GM18951 (cell line): ENCODE measurements at regions of chr14 and their contacts with region 1.

Region 1: DNA sequence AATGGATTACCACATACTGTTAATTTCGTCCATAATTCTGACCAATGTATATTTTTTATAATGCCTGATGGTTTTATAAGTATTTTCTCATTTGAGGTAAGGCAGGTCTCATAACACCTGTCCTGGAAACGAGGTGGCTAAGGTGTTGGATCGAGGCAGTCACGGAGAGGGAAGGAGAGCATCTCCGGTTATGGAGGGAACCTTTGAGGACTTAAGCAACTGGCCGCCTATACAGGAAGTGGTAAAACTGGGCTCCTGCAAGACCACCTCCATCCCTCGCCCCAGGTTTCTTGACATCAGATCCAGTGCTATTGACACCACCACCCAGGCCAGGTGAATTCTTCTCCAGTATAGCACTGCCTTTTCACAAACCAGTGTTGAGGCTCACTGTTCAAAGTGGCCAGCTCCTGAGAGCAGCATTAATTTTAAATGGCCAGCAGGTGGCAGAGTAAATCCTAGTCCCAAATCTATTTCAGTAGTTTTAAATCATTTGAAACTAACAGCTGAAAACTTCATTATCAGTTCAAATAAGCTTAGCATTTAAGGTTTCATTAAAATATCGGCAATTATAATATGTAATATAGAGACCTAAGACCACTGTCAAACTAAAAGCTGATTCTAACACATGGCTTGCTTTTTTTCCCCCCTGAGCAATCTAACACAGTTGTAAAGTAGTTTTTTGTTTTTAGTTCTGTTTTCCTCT is 100.8 kb downstream of the PPM1A start:
- POLR2A ChIP-seq: no peak

Region 2: DNA sequence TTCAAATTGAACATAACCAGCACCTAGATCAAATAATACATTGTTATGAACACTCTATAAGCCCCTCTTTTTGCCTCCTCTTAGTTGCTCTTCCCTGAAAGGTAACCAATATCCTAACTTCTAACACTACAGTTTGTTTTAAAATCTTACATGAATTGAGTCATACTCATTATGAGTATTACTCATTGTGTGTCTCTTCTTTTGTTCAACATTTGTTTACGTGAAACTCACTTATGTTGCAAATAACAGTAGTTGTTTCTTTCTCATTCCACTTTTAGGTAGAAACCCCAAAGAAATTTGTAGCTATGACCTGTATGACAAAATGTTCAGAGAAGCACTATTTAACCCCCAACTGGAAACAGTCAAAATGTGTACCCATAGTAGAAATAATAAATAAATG is 423.3 kb before region 1 on chr14:
- in situ Hi-C with region 1: no loop called
- POLR2A ChIP-seq: no peak

Region 3: DNA sequence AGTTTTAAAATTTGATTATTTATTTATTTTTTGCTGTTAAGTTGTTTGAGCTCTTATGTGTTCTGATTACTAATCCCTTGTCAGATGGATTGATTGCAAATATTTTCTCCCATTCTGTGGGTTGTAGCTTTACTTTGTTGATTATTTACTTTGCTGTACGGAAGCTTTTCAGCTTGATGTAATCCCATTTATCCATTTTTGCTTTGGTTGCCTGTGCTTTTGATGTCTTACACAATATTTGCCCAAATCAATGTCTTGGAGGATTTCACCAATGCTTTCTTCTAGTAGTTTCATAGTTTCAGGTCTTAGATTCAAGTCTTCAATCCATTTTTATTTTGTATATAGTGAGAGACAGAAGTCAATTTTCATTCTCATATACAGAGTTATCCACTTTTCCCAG is 314.6 kb before region 1 on chr14:
- in situ Hi-C with region 1: no loop called
- POLR2A ChIP-seq: no peak

Region 4: DNA sequence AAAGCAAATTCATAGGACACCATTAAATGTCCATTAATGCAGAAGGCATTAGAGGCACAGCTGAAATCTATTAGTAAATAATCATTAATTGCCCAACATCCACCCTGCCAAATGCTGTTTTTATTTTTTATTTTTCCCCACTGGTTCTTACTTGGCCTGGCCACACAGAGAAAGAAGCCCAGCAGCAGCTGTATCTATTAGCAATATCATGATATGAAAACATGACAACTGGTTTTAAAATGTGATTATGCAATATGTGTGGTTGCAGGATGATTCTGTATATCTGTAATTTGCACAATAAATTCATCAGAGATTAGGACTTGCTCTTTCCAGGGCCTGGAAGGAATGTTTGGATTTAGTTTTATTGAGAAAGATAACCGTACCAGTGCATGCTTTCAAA is 204.0 kb after region 1 on chr14:
- in situ Hi-C with region 1: loop called (anchors 10 kb)
- POLR2A ChIP-seq: no peak